ENCODE measurements at regions of chr6 and their contacts with region 1.

Region 1: GRCh38 chr6:149190224-149190831 is 127.2 kb upstream of the TAB2 start:
- DNase-seq: peak in 7 of 9 donors; percentile 8 to 38 (median 20)
- ATAC-seq: peak; percentile 40
- H3K4me3 ChIP-seq: no peak overlapping the region
- H3K4me3 Mint-ChIP-seq: no peak overlapping the region
- H3K27ac ChIP-seq: no peak overlapping the region
- H3K27ac Mint-ChIP-seq: peak overlapping the region in 5 of 9 donors; percentile 15 to 83 (median 38)
- H3K4me1 ChIP-seq: peaks cover 0 to 10% of the 10 kb centered on the region in 2 donors
- H3K4me1 Mint-ChIP-seq: peaks cover 11 to 45% (median 18%) of the 10 kb centered on the region in 7 donors
- H3K27me3 ChIP-seq: no peaks in the 10 kb centered on the region
- H3K27me3 Mint-ChIP-seq: no peaks in the 10 kb centered on the region

Region 2: GRCh38 chr6:149147938-149148718 is 42.2 kb before region 1 on chr6:
- CTCF ChIA-PET with region 1: no interaction called
- POLR2A ChIA-PET with region 1: no interaction called
- intact Hi-C with region 1: loop called (anchors 5 kb)
- DNase-seq: peak in 7 of 9 donors; percentile 31 to 82 (median 56)
- ATAC-seq: peak; percentile 91
- H3K4me3 ChIP-seq: no peak overlapping the region
- H3K4me3 Mint-ChIP-seq: peak overlapping the region in 7 of 10 donors; percentile 7 to 69 (median 54)
- H3K27ac ChIP-seq: peak overlapping the region; percentile 64
- H3K27ac Mint-ChIP-seq: peak overlapping the region; percentile 80 to 97 (median 85)
- H3K4me1 ChIP-seq: peaks cover 26 to 29% of the 10 kb centered on the region in 2 donors
- H3K4me1 Mint-ChIP-seq: peaks cover 35 to 88% (median 55%) of the 10 kb centered on the region in 7 donors
- H3K27me3 ChIP-seq: no peaks in the 10 kb centered on the region
- H3K27me3 Mint-ChIP-seq: no peaks in the 10 kb centered on the region

Region 3: DNA sequence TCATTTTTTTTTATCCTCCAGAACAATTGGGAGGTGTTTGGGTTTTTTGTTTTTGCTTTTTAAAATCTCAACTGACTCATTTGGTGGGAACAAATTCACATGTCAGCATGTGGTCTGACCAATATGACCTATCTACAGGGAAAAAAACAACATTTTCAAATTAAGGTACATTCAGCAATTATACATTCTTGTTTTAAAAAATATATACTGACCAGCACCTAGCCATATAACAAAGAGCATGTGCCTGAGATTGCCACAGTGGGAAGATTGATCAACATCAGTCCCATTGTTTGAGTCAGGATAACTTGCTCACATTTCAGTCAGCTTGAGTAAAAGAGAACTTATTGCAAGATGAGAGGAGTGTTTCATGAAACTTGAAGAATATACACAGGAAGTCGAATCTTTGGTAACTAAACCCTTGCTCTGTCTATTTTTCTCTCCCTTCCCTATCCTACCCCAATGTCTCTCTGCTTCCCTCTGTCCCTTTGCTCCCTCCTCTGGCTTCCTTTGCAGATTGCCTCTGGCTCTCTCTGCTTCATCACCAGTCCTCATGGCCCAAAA is 36.0 kb before region 1 on chr6:
- CTCF ChIA-PET with region 1: no interaction called
- POLR2A ChIA-PET with region 1: no interaction called
- intact Hi-C with region 1: loop called (anchors 5 kb)
- DNase-seq: no peak
- ATAC-seq: no peak
- H3K4me3 ChIP-seq: no peak overlapping the region
- H3K4me3 Mint-ChIP-seq: peak overlapping the region in 5 of 10 donors; percentile 5 to 68 (median 40)
- H3K27ac ChIP-seq: no peak overlapping the region
- H3K27ac Mint-ChIP-seq: peak overlapping the region; percentile 9 to 98 (median 76)
- H3K4me1 ChIP-seq: peaks cover 13 to 23% of the 10 kb centered on the region in 2 donors
- H3K4me1 Mint-ChIP-seq: peaks cover 30 to 65% (median 39%) of the 10 kb centered on the region in 7 donors
- H3K27me3 ChIP-seq: no peaks in the 10 kb centered on the region
- H3K27me3 Mint-ChIP-seq: no peaks in the 10 kb centered on the region

Region 4: GRCh38 chr6:149202967-149203366 is 12.6 kb after region 1 on chr6:
- CTCF ChIA-PET with region 1: no interaction called
- POLR2A ChIA-PET with region 1: interaction called, 3 read pairs
- intact Hi-C with region 1: loop called in 1 of 2 experiments (anchors 2 kb)
- DNase-seq: no peak
- ATAC-seq: no peak
- H3K4me3 ChIP-seq: no peak overlapping the region
- H3K4me3 Mint-ChIP-seq: peak overlapping the region in 2 of 10 donors; percentile 33 to 46
- H3K27ac ChIP-seq: no peak overlapping the region
- H3K27ac Mint-ChIP-seq: peak overlapping the region in 5 of 9 donors; percentile 24 to 62 (median 52)
- H3K4me1 ChIP-seq: peaks cover 0 to 5% of the 10 kb centered on the region in 2 donors
- H3K4me1 Mint-ChIP-seq: peaks cover 2 to 28% (median 13%) of the 10 kb centered on the region in 7 donors
- H3K27me3 ChIP-seq: no peaks in the 10 kb centered on the region
- H3K27me3 Mint-ChIP-seq: no peaks in the 10 kb centered on the region